A673 (cell line): ENCODE measurements at regions of chr22 and their contacts with region 1.

Region 1: GRCh38 chr22:37778370-37779009 is 29.2 kb upstream of the GCAT start:
- DNase-seq: no peak
- H3K4me3 ChIP-seq: no peak overlapping the region
- H3K27ac ChIP-seq: no peak overlapping the region
- H3K4me1 ChIP-seq: no peaks in the 10 kb centered on the region
- H3K27me3 ChIP-seq: no peaks in the 10 kb centered on the region
- CTCF ChIP-seq: no peak

Region 2: DNA sequence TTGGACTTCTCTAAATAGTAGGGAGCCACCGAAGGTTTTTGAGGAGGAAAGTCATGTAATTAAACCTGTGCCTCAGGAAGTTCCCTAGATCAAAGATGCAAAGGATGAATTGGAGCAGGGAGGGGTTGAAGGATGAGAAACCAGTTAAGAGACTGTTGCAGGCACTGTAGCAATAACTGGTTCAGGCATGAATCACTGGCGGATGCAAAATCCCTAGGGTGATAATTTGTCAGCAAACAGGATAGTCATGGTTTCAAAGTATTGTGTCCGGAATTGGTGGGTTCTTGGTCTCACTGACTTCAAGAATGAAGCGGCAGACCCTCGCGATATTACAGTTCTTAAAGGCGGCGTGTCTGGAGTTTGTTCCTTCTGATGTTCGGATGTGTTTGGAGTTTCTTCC is 61.8 kb before region 1 on chr22:
- CTCF ChIA-PET with region 1: no interaction called
- POLR2A ChIA-PET with region 1: interaction called, 15 read pairs
- intact Hi-C with region 1: no loop called
- DNase-seq: peak; percentile 32
- H3K4me3 ChIP-seq: no peak overlapping the region
- H3K27ac ChIP-seq: no peak overlapping the region
- H3K4me1 ChIP-seq: no peaks in the 10 kb centered on the region
- H3K27me3 ChIP-seq: no peaks in the 10 kb centered on the region
- CTCF ChIP-seq: no peak

Region 3: DNA sequence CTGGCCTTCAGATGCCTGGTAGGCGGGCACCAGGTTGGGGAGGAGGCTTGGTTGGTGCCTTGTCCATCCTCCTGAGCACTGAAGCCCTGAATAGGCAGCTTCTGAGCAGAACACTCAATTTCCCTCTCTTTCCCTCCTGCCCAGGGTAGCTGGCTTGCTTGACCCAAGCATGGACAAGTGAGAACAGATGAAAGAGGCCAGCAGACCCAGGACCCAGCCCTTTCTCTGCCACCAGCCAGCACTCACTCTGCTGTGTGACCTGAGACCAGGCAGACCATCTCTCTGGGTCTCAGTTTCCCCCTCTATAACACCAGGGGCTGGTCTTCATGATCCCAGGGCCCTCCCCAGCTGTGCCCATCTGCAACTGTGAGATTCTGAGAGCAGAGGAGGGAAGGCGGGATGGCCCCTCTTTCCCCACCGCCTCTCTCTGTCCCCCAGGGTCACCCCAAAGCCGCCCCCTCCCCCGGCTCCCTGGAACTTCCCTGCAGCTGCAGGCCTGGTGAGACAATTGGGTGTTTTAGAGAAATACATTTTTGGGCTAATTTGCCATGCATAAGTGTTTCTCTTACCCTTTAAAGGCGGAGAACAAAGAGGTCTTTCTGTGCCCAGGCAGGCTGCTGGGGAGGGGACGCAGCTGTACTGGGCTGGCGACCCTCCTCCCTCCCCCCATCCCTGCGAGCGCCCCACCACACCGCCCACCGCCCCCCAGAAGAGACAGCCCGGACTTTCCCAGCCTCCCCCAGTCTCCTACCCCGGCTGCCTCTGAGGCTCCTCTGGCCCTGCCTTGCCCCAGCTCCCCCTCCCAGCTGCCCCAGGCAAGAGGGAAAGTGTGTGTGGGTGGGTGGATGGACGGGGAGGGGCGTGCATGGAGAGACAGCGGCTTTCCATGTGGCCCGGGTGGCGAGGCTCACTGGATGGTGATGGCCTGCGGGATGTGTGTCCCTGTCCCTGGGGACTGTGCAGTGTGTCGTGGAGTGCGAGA is 247.9 kb after region 1 on chr22:
- CTCF ChIA-PET with region 1: no interaction called
- POLR2A ChIA-PET with region 1: no interaction called
- intact Hi-C with region 1: no loop called
- DNase-seq: no peak
- H3K4me3 ChIP-seq: no peak overlapping the region
- H3K27ac ChIP-seq: no peak overlapping the region
- H3K4me1 ChIP-seq: no peaks in the 10 kb centered on the region
- H3K27me3 ChIP-seq: no peaks in the 10 kb centered on the region
- CTCF ChIP-seq: no peak